GM12878 (cell line): ENCODE measurements at regions of chr2 and their contacts with region 1.

Region 1: DNA sequence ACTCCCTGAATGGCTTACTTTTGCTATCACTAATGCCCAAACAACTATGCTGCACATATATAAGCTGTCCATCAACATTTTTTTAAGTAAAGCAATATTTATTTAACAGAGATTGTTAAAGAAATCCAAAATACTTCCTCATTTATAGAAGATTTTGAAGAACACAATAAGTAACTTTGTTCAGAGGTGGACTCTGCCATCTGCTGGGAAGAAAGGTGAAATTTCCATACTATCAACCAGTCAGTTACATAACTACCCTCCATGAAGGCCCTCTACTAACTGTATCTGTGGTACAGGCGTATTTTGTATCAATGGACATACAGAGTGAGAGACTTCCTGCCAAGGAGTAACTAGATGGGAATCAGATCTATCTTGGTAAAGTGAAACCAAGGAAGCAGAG is 106.0 kb downstream of the DTNB start:
- DNase-seq: peak; percentile 67
- ATAC-seq: peak; percentile 85
- H3K4me3 ChIP-seq: no peak overlapping the region
- H3K27ac ChIP-seq: peak overlapping the region; percentile 75
- H3K4me1 ChIP-seq: peaks cover 23% of the 10 kb centered on the region
- H3K27me3 ChIP-seq: no peaks in the 10 kb centered on the region
- CTCF ChIP-seq: peak; percentile 47 to 68 (median 60)
- EP300 ChIP-seq: no peak
- POLR2A ChIP-seq: no peak
- RAD21 ChIP-seq: peak; percentile 78

Region 2: GRCh38 chr2:25165992-25166875 is 401.2 kb before region 1 on chr2:
- CTCF ChIA-PET with region 1: interaction called, 41 read pairs
- POLR2A ChIA-PET with region 1: no interaction called
- RAD21 ChIA-PET with region 1: interaction called, 22 read pairs
- SMC1A ChIA-PET with region 1: interaction called, 20 read pairs
- in situ Hi-C with region 1: no loop called
- intact Hi-C with region 1: loop called (anchors 1 kb)
- DNase-seq: peak; percentile 49
- ATAC-seq: peak; percentile 97
- H3K4me3 ChIP-seq: no peak overlapping the region
- H3K27ac ChIP-seq: no peak overlapping the region
- H3K4me1 ChIP-seq: peaks cover 18% of the 10 kb centered on the region
- H3K27me3 ChIP-seq: peaks cover 5 to 14% of the 10 kb centered on the region in 2 experiments; a peak in 3 of 4 replicates
- CTCF ChIP-seq: peak; percentile 74 to 97 (median 79)
- EP300 ChIP-seq: no peak
- POLR2A ChIP-seq: no peak
- RAD21 ChIP-seq: peak; percentile 82

Region 3: DNA sequence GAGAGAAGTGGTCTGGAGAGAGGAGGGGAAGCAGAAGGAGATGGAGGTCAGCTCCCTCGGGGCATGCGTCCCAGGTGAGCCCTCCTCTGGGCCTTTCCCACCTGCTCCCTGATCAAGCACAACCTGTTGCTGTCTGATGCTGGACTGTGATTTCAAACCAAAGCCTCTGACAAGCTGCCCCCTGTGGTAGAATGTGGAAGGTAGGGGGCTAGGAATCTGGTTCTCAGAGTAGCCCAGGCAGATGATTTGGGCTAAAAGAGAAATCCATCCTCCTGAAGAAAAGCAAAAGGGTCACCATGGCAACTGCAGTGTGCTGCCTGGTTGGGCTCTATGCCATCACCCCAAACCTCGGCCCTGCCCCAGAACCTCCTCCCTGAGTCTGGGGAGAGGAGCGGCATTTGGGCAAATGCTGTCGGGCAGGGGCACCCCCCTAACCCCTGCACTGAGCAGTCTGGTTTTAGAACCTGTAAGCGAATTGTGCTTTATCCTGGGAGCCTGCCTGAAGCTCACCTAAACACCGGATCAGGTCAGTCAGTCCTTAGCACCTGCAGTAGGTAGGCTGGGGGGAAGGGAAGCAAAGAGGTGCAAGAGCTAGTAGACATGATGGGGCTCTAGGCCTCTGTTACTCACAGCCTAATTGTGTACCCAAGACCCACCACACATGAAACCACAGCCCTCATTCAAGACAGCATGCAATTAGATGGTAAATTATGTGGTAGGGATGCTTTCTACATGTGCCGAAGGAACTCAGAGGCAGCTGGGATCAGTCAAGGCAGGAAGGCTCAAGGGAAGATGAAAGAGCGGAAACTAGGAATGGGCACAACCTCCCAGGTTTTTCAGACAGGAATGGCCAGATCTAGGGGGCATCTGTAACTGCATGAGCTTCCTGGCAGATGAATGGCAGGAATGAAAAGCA is 309.2 kb before region 1 on chr2:
- CTCF ChIA-PET with region 1: no interaction called
- POLR2A ChIA-PET with region 1: no interaction called
- RAD21 ChIA-PET with region 1: no interaction called
- SMC1A ChIA-PET with region 1: no interaction called
- in situ Hi-C with region 1: no loop called
- intact Hi-C with region 1: no loop called
- DNase-seq: no peak
- ATAC-seq: no peak
- H3K4me3 ChIP-seq: no peak overlapping the region
- H3K27ac ChIP-seq: no peak overlapping the region
- H3K4me1 ChIP-seq: no peaks in the 10 kb centered on the region
- H3K27me3 ChIP-seq: no peaks in the 10 kb centered on the region
- CTCF ChIP-seq: no peak
- EP300 ChIP-seq: no peak
- POLR2A ChIP-seq: no peak
- RAD21 ChIP-seq: no peak

Region 4: DNA sequence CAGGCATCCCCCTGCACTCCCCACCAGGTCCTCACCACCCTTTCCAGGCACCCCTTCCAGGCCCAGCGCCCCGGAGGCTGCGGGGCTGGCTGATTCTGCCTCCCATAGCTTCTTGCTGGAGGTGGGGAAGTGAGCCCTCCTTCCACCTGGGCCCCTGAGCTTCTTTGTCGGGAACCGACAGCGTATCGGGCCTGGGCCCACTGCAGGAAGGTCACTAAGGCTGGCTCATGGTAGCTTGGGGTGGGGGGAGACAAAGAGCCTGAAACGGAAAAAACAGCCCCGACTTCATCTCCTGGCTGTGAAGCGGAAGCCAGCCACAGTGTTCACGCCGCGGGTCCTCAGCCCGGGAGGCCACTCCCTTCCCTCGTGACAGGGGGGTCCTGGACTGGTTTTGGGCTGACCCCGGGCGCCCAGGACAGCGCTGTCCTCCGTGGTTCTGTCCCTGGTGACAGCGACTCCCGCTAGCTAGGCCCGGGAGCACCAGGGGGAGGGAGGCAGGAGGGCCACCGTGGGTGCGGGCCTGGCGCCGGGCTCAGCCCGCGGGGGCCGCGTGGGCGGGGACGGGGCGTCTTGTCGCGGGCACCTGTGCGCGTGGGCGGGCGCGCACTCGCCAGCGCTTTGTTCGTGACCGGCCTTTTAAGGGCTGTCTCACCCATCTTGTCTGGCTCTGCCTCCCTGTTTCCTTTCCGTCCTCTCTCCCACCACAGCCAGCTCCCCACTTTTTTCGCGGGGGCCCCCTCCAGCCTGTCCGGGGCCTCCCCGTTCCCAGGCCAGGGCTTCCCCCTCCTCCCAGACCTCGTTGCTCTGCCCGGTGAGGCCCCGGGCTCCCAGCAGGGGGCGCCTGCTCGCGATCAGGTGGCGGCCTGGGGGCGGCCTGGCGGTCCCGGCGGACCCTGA is 290.6 kb before region 1 on chr2:
- CTCF ChIA-PET with region 1: interaction called, 29 read pairs
- POLR2A ChIA-PET with region 1: interaction called, 3 read pairs
- RAD21 ChIA-PET with region 1: interaction called, 9 read pairs
- SMC1A ChIA-PET with region 1: interaction called, 13 read pairs
- in situ Hi-C with region 1: no loop called
- intact Hi-C with region 1: loop called (anchors 5 kb)
- DNase-seq: no peak
- ATAC-seq: peak; percentile 41
- H3K4me3 ChIP-seq: peak overlapping the region; percentile 45; the same call in 1 of the 2 replicates
- H3K27ac ChIP-seq: peak overlapping the region; percentile 77
- H3K4me1 ChIP-seq: peaks cover 86% of the 10 kb centered on the region
- H3K27me3 ChIP-seq: no peaks in the 10 kb centered on the region
- CTCF ChIP-seq: peak; percentile 75 to 89 (median 80)
- EP300 ChIP-seq: 0 out of 4 replicates have a peak, but pooled peaks of 1 of the 2 experiments have one; percentile 34
- POLR2A ChIP-seq: peak; percentile 54; the same call in 1 of the 2 replicates
- RAD21 ChIP-seq: peak; percentile 58; the same call in 1 of the 2 replicates

Region 5: GRCh38 chr2:25342372-25343186 is 224.8 kb before region 1 on chr2:
- CTCF ChIA-PET with region 1: interaction called, 15 read pairs
- POLR2A ChIA-PET with region 1: interaction called, 3 read pairs
- RAD21 ChIA-PET with region 1: interaction called, 9 read pairs
- SMC1A ChIA-PET with region 1: interaction called, 11 read pairs
- in situ Hi-C with region 1: no loop called
- intact Hi-C with region 1: loop called (anchors 10 kb)
- DNase-seq: no peak
- ATAC-seq: peak; percentile 94
- H3K4me3 ChIP-seq: peak overlapping the region; percentile 76; the same call in 1 of the 2 replicates
- H3K27ac ChIP-seq: peak overlapping the region; percentile 52
- H3K4me1 ChIP-seq: peaks cover 12% of the 10 kb centered on the region
- H3K27me3 ChIP-seq: no peaks in the 10 kb centered on the region; a peak in 1 of 4 replicates
- CTCF ChIP-seq: peak; percentile 93 to 99 (median 97)
- EP300 ChIP-seq: no peak
- POLR2A ChIP-seq: peak; percentile 50; the same call in 1 of the 2 replicates
- RAD21 ChIP-seq: peak; percentile 90

Region 6: DNA sequence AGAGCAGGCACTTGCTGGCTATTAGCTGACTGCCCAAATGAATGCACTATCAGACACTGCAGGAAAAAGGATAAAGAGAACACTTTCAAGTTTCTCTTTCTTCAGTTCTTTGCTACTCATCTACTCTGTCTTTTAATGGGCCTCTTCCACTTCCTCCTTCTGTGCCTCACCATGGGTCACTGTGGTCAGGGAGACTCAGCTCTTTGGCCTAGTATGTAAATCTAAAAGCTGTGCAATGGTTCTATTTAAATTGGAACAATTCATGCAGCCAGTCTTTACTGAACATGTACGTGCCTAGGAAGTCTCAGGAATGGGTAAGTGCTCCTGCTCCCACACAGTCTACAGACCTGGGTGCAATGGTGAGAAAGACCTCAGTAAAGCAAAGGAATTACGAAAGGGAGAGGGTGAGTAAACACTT is 146.6 kb before region 1 on chr2:
- CTCF ChIA-PET with region 1: interaction called, 24 read pairs
- POLR2A ChIA-PET with region 1: interaction called, 8 read pairs
- RAD21 ChIA-PET with region 1: interaction called, 35 read pairs
- SMC1A ChIA-PET with region 1: interaction called, 7 read pairs
- in situ Hi-C with region 1: no loop called
- intact Hi-C with region 1: loop called (anchors 2 kb)
- DNase-seq: peak; percentile 93
- ATAC-seq: peak; percentile 64
- H3K4me3 ChIP-seq: peak overlapping the region; percentile 75
- H3K27ac ChIP-seq: peak overlapping the region; percentile 98
- H3K4me1 ChIP-seq: peaks cover 35% of the 10 kb centered on the region
- H3K27me3 ChIP-seq: no peaks in the 10 kb centered on the region
- CTCF ChIP-seq: no peak
- EP300 ChIP-seq: peak; percentile 82 to 95
- POLR2A ChIP-seq: peak; percentile 72
- RAD21 ChIP-seq: 0 out of 2 replicates have a peak, but pooled peaks have one; percentile 12

Region 7: DNA sequence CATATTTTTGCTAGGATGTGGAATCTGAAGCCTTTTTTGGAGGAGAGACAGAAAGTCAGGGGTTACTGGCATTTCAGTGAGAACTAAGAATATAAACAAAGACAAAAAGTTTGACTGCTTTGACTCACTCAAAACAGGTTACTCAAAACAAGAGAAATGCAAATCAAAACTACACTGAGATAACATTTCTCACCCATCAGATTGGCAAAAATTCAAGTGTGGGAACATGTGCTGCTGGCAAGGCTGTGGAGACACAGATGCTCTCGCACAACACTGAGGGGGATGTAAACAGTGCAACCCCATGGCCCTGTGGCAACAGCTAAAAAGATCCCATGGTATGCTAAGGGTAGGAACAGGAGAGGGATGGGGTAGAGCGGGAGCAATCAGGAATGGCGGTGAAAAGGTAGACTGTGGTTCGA is 19.3 kb after region 1 on chr2:
- CTCF ChIA-PET with region 1: interaction called, 29 read pairs
- POLR2A ChIA-PET with region 1: interaction called, 3 read pairs
- RAD21 ChIA-PET with region 1: interaction called, 11 read pairs
- SMC1A ChIA-PET with region 1: interaction called, 18 read pairs
- in situ Hi-C with region 1: no loop called
- intact Hi-C with region 1: no loop called
- DNase-seq: peak; percentile 92
- ATAC-seq: peak; percentile 93
- H3K4me3 ChIP-seq: no peak overlapping the region
- H3K27ac ChIP-seq: peak overlapping the region; percentile 41; the same call in 1 of the 2 replicates
- H3K4me1 ChIP-seq: peaks cover 38% of the 10 kb centered on the region
- H3K27me3 ChIP-seq: no peaks in the 10 kb centered on the region
- CTCF ChIP-seq: no peak
- EP300 ChIP-seq: peak; percentile 90 to 91
- POLR2A ChIP-seq: 0 out of 2 replicates have a peak, but pooled peaks have one; percentile 20
- RAD21 ChIP-seq: no peak; the same call in 1 of the 2 replicates

Region 8: DNA sequence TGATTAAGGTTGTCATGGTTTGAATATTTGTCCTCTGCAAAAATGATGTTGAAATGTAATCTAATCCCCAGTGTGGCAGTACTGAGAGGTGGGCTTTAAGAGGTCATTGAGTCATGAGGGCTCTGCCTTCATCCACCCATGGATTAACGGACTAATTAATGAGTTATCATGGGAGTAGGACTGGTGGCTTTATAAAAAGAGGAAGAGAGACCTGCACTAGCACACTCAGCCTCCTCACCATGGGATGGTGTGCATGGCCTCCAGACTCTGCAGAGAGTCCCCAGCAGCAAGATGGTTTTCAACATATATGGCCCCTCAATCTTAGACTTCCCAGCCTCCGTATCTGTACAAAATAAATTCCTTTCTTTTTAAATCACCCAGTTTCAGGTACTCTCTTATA is 65.0 kb after region 1 on chr2:
- CTCF ChIA-PET with region 1: no interaction called
- POLR2A ChIA-PET with region 1: no interaction called
- RAD21 ChIA-PET with region 1: no interaction called
- SMC1A ChIA-PET with region 1: no interaction called
- in situ Hi-C with region 1: no loop called
- intact Hi-C with region 1: no loop called
- DNase-seq: no peak
- ATAC-seq: no peak; the same call in 2 of the 3 replicates
- H3K4me3 ChIP-seq: no peak overlapping the region
- H3K27ac ChIP-seq: no peak overlapping the region
- H3K4me1 ChIP-seq: no peaks in the 10 kb centered on the region
- H3K27me3 ChIP-seq: no peaks in the 10 kb centered on the region
- CTCF ChIP-seq: no peak
- EP300 ChIP-seq: no peak
- POLR2A ChIP-seq: no peak
- RAD21 ChIP-seq: no peak

Region 9: GRCh38 chr2:25664183-25664964 is 97.0 kb after region 1 on chr2:
- CTCF ChIA-PET with region 1: interaction called, 14 read pairs
- POLR2A ChIA-PET with region 1: no interaction called
- RAD21 ChIA-PET with region 1: interaction called, 6 read pairs
- SMC1A ChIA-PET with region 1: interaction called, 15 read pairs
- in situ Hi-C with region 1: no loop called
- intact Hi-C with region 1: no loop called
- DNase-seq: no peak
- ATAC-seq: peak; percentile 74
- H3K4me3 ChIP-seq: no peak overlapping the region
- H3K27ac ChIP-seq: no peak overlapping the region
- H3K4me1 ChIP-seq: no peaks in the 10 kb centered on the region
- H3K27me3 ChIP-seq: no peaks in the 10 kb centered on the region
- CTCF ChIP-seq: peak; percentile 63 to 72 (median 67)
- EP300 ChIP-seq: no peak
- POLR2A ChIP-seq: no peak
- RAD21 ChIP-seq: peak; percentile 95

Region 10: DNA sequence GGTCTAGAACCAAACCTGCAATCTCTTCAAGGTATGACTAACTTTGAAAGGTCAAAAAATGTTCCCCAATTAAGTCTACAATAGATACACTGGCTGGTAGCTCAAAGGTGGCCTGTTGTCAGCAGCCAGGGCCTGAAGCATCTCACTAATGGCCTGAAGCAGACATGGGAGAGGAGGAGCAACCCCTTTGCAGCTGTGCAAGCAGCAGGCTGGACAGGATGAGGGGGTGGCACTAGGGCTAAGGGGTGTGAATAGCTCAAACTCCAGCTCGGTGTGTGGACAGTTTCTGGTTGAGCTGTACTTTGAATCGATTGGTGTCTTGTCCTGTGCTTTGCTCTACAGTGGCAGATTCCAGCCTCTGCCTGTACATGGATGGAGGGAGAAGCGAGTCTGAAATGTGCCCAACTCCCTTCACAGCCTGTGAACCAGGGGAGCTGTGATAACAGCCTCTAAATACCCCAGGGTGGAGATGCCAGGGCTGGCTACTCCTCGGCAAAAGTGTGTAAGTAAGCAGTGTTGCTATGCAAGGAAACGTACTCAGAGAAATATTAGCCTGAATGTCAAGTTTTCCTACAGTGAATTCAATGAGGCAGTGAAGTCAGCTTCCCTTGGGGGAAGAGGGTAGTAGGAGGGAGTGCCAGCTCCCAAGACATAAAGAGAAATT is 140.7 kb after region 1 on chr2:
- CTCF ChIA-PET with region 1: no interaction called
- POLR2A ChIA-PET with region 1: no interaction called
- RAD21 ChIA-PET with region 1: no interaction called
- SMC1A ChIA-PET with region 1: no interaction called
- in situ Hi-C with region 1: no loop called
- intact Hi-C with region 1: no loop called
- DNase-seq: no peak
- ATAC-seq: peak; percentile 67
- H3K4me3 ChIP-seq: no peak overlapping the region
- H3K27ac ChIP-seq: no peak overlapping the region
- H3K4me1 ChIP-seq: peaks cover 6% of the 10 kb centered on the region
- H3K27me3 ChIP-seq: no peaks in the 10 kb centered on the region
- CTCF ChIP-seq: no peak
- EP300 ChIP-seq: no peak
- POLR2A ChIP-seq: no peak
- RAD21 ChIP-seq: no peak